IMR-90 (cell line): ENCODE measurements at regions of chr2 and their contacts with region 1.

Region 1: GRCh38 chr2:27935026-27935425 is 44.5 kb downstream of the BABAM2 start:
- DNase-seq: no peak
- ATAC-seq: no peak
- H3K4me3 ChIP-seq: no peak overlapping the region
- H3K27ac ChIP-seq: no peak overlapping the region
- H3K4me1 ChIP-seq: 0 out of 2 replicates have a peak, but pooled peaks cover 3% of the 10 kb centered on the region
- H3K27me3 ChIP-seq: no peaks in the 10 kb centered on the region
- CTCF ChIP-seq: no peak
- POLR2A ChIP-seq: no peak
- RAD21 ChIP-seq: no peak

Region 2: GRCh38 chr2:27903649-27904404 is 31.2 kb before region 1 on chr2:
- CTCF ChIA-PET with region 1: no interaction called
- POLR2A ChIA-PET with region 1: no interaction called
- dilution Hi-C with region 1: no loop called
- in situ Hi-C with region 1: no loop called
- intact Hi-C with region 1: loop called (anchors 5 kb)
- DNase-seq: peak; percentile 52
- ATAC-seq: no peak
- H3K4me3 ChIP-seq: no peak overlapping the region
- H3K27ac ChIP-seq: no peak overlapping the region
- H3K4me1 ChIP-seq: peaks cover 4% of the 10 kb centered on the region; the same call in 1 of the 2 replicates
- H3K27me3 ChIP-seq: no peaks in the 10 kb centered on the region
- CTCF ChIP-seq: no peak
- POLR2A ChIP-seq: no peak
- RAD21 ChIP-seq: no peak

Region 3: DNA sequence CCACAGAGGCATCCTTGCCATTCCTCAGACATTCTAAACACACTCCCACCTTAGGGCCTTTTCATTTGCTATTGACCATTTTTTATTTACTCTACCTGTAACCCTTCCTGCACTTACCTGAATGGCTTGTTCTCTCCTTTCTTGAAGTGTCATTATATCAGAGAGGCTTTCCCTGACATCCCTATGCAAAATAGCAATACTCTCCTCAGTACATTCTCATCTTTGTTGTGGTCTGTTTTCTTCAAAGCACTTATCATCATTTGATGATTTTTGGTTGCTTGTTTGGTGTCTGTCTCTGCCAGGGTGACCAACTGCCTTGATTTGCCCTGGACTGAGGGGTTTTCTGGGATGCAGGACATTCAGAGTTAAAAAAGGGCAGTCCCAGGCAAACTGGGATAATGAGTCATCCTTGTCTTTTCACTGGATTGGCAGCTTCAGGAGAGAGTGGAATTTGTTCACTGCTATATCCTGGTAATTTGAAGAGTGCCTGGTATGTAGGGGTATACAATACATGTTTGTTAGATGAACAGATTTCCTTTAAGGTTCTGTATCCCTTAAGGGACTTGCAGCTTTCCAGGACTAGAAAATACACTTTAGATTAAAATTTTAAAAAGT is 57.9 kb after region 1 on chr2:
- CTCF ChIA-PET with region 1: no interaction called
- POLR2A ChIA-PET with region 1: no interaction called
- dilution Hi-C with region 1: no loop called
- in situ Hi-C with region 1: no loop called
- intact Hi-C with region 1: no loop called
- DNase-seq: peak; percentile 78
- ATAC-seq: peak; percentile 94
- H3K4me3 ChIP-seq: no peak overlapping the region
- H3K27ac ChIP-seq: no peak overlapping the region
- H3K4me1 ChIP-seq: peaks cover 7% of the 10 kb centered on the region
- H3K27me3 ChIP-seq: no peaks in the 10 kb centered on the region
- CTCF ChIP-seq: no peak
- POLR2A ChIP-seq: no peak
- RAD21 ChIP-seq: no peak